Caco-2 (cell line): ENCODE measurements at regions of chr22 and their contacts with region 1.

Region 1: DNA sequence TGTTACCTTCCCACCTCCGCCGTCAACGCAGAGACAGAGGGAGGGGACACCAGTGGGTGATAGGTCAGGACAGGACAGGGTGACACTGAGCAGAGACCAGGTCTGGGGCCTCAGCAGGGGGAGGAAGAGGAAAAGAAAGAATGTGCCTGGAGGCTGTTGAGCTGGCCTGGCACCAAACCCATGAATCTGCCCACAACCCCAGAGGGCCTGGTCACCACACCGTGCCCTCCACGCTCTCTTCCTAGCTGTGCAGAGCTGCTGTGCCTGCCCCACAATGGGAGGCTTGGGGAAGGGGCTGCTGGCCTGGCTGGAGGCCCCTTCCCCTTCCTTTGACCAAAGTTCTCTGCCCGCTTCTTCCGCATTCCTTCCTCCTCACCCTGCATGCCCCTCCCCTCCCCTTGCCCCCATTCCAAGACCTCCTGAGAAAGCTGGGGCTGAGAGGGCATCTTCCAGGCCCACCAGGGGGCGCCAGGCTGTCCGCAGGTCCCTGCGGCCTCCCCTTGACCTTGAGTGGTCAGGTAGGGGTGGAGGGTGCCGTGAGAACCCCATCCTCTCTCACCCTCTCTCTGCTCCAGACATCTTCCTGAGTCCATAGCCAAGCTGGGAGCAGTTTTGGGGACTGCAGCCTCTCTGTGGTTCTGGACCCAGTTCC is 11.0 kb upstream of the CACNA1I start:
- DNase-seq: peak in 1 of 2 experiments; percentile 45
- H3K4me3 ChIP-seq: no peak overlapping the region
- H3K4me3 Mint-ChIP-seq: no peak overlapping the region
- H3K27ac Mint-ChIP-seq: no peak overlapping the region
- H3K4me1 ChIP-seq: no peaks in the 10 kb centered on the region
- H3K4me1 Mint-ChIP-seq: peaks cover 5% of the 10 kb centered on the region
- H3K27me3 ChIP-seq: peaks cover 6% of the 10 kb centered on the region
- H3K27me3 Mint-ChIP-seq: peaks cover 14% of the 10 kb centered on the region
- CTCF ChIP-seq: peak; percentile 56 to 60

Region 2: DNA sequence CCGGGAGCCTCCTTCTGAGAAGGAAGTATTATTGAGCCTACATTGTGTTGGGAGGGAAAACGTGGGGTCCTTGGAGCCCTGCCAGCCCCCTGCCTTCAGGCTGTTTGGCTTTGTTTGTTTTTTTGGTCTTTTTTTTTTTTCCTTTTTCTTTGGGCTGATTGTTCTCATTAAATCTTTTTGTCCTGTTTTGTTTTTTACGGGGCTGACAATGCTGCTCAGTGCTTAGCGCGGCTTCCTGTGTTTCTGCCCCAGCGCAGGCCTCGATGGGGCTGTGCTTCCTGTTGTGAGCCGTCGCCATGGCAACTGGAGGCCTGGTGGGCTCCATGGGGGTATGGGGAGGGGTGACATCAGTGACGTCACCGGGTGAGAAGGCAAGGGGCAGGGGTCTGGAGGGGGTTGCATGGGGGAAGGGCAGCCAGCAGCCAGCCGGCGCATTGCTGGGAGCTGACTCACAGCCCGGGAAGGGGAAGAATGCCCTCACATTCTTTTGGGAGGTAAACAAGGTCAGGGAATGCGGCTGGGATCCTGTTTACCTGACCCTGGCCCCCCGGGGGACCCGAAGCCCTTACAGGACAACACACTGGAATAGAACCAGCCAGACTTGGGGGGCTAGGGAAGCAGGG is 385.0 kb before region 1 on chr22:
- CTCF ChIA-PET with region 1: no interaction called
- POLR2A ChIA-PET with region 1: no interaction called
- intact Hi-C with region 1: no loop called
- DNase-seq: peak; percentile 87 to 91
- H3K4me3 ChIP-seq: no peak overlapping the region
- H3K4me3 Mint-ChIP-seq: peak overlapping the region; percentile 57
- H3K27ac Mint-ChIP-seq: peak overlapping the region; percentile 100
- H3K4me1 ChIP-seq: peaks cover 57% of the 10 kb centered on the region
- H3K4me1 Mint-ChIP-seq: peaks cover 59% of the 10 kb centered on the region
- H3K27me3 ChIP-seq: no peaks in the 10 kb centered on the region
- H3K27me3 Mint-ChIP-seq: peaks cover 3% of the 10 kb centered on the region
- CTCF ChIP-seq: no peak

Region 3: DNA sequence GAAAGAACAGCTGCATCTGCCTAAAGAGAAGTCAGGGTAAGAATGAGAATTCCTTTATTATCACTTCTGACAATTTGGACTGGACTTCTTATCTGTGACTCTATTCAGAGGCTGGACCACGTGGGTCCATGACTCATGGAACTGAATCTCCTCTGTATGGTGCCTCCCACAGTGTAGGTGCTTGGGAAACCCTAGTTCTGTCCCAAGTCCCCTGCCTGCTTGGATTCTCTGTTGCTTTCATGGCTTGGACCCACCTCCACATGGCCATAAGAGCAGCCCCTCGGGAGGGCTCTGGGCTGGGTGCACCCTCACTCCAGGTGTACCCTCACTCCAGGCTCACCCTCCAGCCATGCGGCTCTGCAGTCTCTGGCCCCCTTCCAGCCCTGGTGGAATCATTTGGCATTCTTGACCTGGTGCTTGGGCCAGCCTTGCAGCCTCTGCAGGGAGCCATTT is 164.3 kb after region 1 on chr22:
- CTCF ChIA-PET with region 1: no interaction called
- POLR2A ChIA-PET with region 1: no interaction called
- intact Hi-C with region 1: loop called (anchors 10 kb)
- DNase-seq: peak; percentile 46 to 48
- H3K4me3 ChIP-seq: no peak overlapping the region
- H3K4me3 Mint-ChIP-seq: peak overlapping the region; percentile 30
- H3K27ac Mint-ChIP-seq: peak overlapping the region; percentile 70
- H3K4me1 ChIP-seq: peaks cover 16% of the 10 kb centered on the region
- H3K4me1 Mint-ChIP-seq: peaks cover 12% of the 10 kb centered on the region
- H3K27me3 ChIP-seq: no peaks in the 10 kb centered on the region
- H3K27me3 Mint-ChIP-seq: no peaks in the 10 kb centered on the region
- CTCF ChIP-seq: no peak